ENCODE measurements at regions of chr11 and their contacts with region 1.

Region 1: GRCh38 chr11:44036811-44037657 is 10.7 kb upstream of the ACCSL start:
- DNase-seq: peak; percentile 88
- ATAC-seq: peak; percentile 95

Region 2: DNA sequence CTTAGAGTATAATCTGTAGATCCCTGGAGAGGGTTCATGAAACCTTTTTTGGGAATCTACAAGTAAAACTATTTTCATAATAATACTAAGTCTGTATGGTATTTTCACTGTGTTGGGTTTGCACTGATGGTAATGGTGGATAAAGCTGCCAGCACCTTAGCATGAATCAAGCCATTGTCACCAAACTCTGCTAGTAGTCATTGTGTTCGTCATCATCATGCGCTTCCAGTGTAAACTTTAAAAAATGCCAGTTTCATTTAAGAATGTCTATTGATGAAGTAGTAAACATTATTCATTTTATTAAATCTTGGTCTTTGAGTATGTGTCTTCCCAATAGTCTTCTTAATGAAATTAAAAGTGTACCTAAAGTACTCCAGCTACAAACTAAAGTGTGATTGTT is 141.4 kb before region 1 on chr11:
- intact Hi-C with region 1: loop called (anchors 2 kb)
- DNase-seq: no peak
- ATAC-seq: no peak

Region 3: GRCh38 chr11:43944761-43945311 is 92.2 kb before region 1 on chr11:
- intact Hi-C with region 1: loop called (anchors 10 kb)
- DNase-seq: peak; percentile 85
- ATAC-seq: peak; percentile 47

Region 4: DNA sequence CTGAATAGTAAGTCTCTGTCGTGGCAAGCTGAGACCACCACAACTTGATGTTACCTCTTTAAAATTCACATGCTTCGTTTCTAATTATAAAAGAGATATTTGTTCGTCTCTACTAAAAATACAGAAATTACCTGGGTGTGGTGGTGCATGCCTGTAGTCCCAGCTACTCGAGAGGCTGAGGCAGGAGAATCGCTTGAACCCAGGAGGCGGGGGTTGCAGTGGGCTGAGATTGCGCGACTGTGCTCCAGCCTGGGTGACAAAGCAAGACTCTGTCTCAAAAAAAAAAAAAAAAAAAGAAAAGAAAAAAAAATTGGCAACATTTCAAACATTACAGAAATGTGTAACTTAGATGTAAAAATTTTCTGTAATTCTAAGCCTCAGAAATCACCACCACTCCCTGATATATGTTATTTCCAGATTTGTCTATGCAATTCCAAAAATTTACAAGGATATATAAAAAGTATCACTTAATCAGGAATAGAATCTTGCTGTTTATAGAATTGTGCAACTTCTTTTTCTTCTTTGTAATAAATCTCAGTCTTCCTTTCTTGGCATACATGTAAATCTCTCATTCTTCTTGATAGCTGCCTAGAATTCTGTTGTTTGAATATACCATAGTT is 57.4 kb before region 1 on chr11:
- intact Hi-C with region 1: no loop called
- DNase-seq: no peak
- ATAC-seq: no peak

Region 5: GRCh38 chr11:44680982-44681597 is 644.1 kb after region 1 on chr11:
- intact Hi-C with region 1: no loop called
- DNase-seq: no peak
- ATAC-seq: no peak

Measured in left ventricle myocardium superior (tissue), 1 donor.